ENCODE measurements at regions of chr5 and their contacts with region 1.

Region 1: GRCh38 chr5:13427871-13428725 is 516.4 kb downstream of the DNAH5 start:
- DNase-seq: no peak
- H3K4me3 ChIP-seq: no peak overlapping the region
- H3K27ac ChIP-seq: no peak overlapping the region
- H3K4me1 ChIP-seq: no peaks in the 10 kb centered on the region
- H3K27me3 ChIP-seq: no peaks in the 10 kb centered on the region
- CTCF ChIP-seq: no peak
- POLR2A ChIP-seq: no peak

Region 2: GRCh38 chr5:12330993-12331588 is 1097.0 kb before region 1 on chr5:
- intact Hi-C with region 1: loop called (anchors 5 kb)
- DNase-seq: no peak
- H3K4me3 ChIP-seq: no peak overlapping the region
- H3K27ac ChIP-seq: no peak overlapping the region
- H3K4me1 ChIP-seq: no peaks in the 10 kb centered on the region
- H3K27me3 ChIP-seq: no peaks in the 10 kb centered on the region
- CTCF ChIP-seq: no peak
- POLR2A ChIP-seq: no peak

Region 3: DNA sequence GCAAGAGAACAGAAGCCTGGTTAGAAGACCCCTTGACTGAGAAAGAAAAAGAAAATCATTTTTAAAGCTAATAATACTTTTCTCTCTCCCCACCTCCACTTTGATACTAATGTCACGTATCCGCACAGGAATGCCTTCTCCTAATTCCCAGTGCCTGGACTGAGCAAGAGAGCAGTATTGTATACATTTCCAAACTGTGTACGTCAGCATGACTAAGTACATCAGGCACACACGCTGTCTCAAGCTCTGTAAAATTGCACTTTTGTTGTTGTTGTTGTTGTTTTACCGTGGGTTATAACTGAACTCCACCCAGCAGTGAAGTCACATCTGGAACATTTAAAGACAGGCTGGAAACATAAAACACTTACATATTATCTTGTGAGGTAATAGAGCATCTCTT is 108.8 kb after region 1 on chr5:
- intact Hi-C with region 1: no loop called
- DNase-seq: no peak
- H3K4me3 ChIP-seq: no peak overlapping the region
- H3K27ac ChIP-seq: no peak overlapping the region
- H3K4me1 ChIP-seq: no peaks in the 10 kb centered on the region
- H3K27me3 ChIP-seq: no peaks in the 10 kb centered on the region
- CTCF ChIP-seq: no peak
- POLR2A ChIP-seq: no peak

Region 4: DNA sequence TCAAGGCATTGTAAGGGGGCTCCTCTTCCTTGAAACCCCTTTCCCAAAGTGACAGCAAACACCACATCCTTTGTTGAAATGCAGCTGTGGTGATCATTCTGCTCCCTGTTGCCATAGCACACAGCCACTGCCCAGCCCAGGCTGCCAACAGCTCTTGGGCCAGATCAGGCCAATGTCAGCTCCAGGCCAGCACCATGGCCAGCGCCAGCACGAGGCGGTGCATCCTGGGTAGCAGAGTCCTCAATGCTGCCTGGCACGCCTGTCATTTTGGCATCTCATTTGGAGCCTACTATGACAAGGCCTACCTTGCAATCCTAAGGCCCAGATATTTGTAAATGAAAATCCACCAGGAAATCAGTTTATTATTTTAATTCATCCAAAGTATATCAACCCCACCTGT is 125.8 kb after region 1 on chr5:
- intact Hi-C with region 1: no loop called
- DNase-seq: no peak
- H3K4me3 ChIP-seq: no peak overlapping the region
- H3K27ac ChIP-seq: no peak overlapping the region
- H3K4me1 ChIP-seq: no peaks in the 10 kb centered on the region
- H3K27me3 ChIP-seq: no peaks in the 10 kb centered on the region
- CTCF ChIP-seq: no peak
- POLR2A ChIP-seq: no peak

Region 5: DNA sequence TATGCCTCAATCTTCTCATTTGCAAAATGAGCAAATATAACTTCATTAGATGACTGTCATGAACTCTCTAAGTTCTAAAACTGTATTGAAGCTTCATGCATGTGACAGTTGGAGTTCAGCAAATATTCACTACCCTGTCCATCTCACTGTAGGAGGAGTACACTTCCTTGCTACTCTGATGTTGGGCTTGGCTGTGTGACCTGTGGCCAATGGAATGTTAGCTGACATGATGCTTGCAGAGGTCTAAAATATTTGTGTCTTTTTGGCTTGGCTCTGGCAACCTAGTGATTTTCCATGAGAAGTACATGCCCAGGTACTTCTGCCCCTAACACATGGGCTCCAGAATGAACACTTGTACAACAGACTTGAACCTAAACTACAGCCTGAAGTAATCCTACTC is 1646.6 kb after region 1 on chr5:
- intact Hi-C with region 1: no loop called
- DNase-seq: no peak
- H3K4me3 ChIP-seq: no peak overlapping the region
- H3K27ac ChIP-seq: no peak overlapping the region
- H3K4me1 ChIP-seq: no peaks in the 10 kb centered on the region
- H3K27me3 ChIP-seq: no peaks in the 10 kb centered on the region
- CTCF ChIP-seq: no peak
- POLR2A ChIP-seq: no peak